ENCODE measurements at regions of chr1 and their contacts with region 1.

Region 1: GRCh38 chr1:200488375-200489165 is 78.7 kb upstream of the ZNF281 start:
- DNase-seq: peak; percentile 78 to 83
- H3K4me3 ChIP-seq: no peak overlapping the region
- H3K4me1 ChIP-seq: peaks cover 2% of the 10 kb centered on the region; the same call in 1 of the 2 replicates
- H3K27me3 ChIP-seq: no peaks in the 10 kb centered on the region

Region 2: GRCh38 chr1:200139661-200140250 is 348.8 kb before region 1 on chr1:
- in situ Hi-C with region 1: loop called (anchors 25 kb)
- DNase-seq: peak; percentile 53 to 68
- H3K4me3 ChIP-seq: no peak overlapping the region
- H3K4me1 ChIP-seq: no peaks in the 10 kb centered on the region
- H3K27me3 ChIP-seq: no peaks in the 10 kb centered on the region

Region 3: DNA sequence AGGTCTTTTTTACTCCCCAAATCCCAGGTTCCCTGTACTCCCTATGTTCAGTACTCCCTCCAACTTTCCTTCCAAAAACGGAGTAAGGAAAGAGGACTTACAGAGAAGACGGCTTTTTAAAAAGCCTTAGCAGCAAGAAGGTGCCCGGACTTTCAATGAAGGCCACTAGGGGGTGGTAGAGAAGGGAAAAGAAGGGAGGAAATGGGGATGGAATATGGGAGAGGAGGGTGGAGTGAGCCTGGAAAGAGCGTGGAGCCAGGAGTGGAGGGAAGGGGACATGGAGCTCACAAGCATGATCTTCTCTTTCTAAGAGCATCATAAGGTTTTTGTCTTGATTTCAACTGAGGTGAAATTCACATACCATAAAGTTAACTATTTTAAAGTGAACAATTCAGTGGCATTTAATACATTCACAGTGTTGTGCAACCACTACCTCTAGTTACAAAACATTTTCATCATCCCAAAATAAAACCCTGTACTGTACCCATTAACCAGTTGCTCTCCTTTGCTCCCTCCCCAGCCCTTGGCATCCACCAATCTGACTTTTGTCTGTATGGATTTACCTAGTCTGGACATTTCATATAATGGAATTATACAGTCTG is 208.7 kb before region 1 on chr1:
- in situ Hi-C with region 1: loop called (anchors 10 kb)
- DNase-seq: peak; percentile 60 to 83
- H3K4me3 ChIP-seq: no peak overlapping the region
- H3K4me1 ChIP-seq: no peaks in the 10 kb centered on the region
- H3K27me3 ChIP-seq: no peaks in the 10 kb centered on the region